ENCODE measurements at regions of chr4 and their contacts with region 1.

Region 1: DNA sequence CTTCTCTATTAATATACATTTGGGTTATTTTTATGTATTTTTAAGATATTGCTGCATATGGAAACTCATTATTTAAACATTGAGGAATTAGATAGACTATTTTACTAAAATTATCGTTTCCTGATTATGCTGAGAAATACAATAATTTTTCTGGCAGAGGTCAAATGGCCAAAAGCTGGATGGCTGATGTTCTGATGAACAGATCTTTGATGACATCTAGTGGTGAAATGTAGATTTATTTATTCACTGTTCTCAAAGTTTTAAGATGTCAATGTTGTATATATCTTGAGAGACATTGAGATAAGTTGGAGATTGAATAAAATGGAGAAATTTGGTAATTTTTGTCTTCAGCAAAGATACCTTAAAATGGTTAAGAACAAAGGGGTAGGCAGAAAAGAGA is 96.2 kb downstream of the UGT8 start:
- DNase-seq: peak; percentile 58
- H3K4me3 ChIP-seq: no peak overlapping the region
- H3K27ac ChIP-seq: no peak overlapping the region
- H3K4me1 ChIP-seq: peaks cover 4% of the 10 kb centered on the region
- H3K27me3 ChIP-seq: peaks cover 0 to 1% of the 10 kb centered on the region in 2 experiments
- CTCF ChIP-seq: peak; percentile 16
- POLR2A ChIP-seq: no peak

Region 2: DNA sequence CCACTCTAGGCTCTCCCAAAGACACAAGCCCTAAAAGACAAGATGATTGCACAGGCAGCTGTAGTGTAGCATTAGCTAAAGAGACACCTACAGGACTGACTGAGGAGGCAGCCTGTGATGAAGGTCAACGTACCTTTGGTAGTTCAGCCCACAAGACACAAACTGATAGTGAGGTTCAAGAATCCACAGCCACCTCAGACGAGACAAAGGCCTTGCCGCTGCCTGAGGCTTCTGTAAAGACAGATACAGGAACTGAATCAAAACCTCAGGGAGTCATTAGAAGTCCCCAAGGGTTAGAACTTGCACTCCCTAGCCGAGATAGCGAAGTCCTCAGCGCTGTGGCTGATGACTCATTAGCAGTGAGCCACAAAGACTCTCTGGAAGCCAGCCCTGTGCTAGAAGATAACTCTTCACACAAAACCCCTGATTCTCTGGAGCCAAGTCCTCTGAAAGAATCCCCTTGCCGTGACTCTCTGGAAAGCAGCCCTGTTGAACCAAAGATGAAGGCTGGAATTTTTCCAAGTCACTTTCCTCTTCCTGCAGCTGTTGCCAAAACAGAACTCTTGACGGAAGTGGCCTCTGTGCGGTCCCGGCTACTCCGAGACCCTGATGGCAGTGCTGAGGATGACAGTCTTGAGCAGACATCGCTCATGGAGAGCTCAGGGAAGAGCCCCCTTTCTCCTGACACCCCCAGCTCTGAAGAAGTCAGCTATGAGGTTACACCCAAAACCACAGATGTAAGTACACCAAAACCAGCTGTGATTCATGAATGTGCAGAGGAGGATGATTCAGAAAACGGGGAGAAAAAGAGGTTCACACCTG is 1339.0 kb before region 1 on chr4:
- CTCF ChIA-PET with region 1: no interaction called
- POLR2A ChIA-PET with region 1: no interaction called
- dilution Hi-C with region 1: no loop called
- intact Hi-C with region 1: loop called (anchors 10 kb)
- DNase-seq: peak; percentile 11
- H3K4me3 ChIP-seq: no peak overlapping the region
- H3K27ac ChIP-seq: no peak overlapping the region
- H3K4me1 ChIP-seq: no peaks in the 10 kb centered on the region
- H3K27me3 ChIP-seq: peaks cover 0 to 16% of the 10 kb centered on the region in 2 experiments
- CTCF ChIP-seq: no peak
- POLR2A ChIP-seq: no peak

Region 3: DNA sequence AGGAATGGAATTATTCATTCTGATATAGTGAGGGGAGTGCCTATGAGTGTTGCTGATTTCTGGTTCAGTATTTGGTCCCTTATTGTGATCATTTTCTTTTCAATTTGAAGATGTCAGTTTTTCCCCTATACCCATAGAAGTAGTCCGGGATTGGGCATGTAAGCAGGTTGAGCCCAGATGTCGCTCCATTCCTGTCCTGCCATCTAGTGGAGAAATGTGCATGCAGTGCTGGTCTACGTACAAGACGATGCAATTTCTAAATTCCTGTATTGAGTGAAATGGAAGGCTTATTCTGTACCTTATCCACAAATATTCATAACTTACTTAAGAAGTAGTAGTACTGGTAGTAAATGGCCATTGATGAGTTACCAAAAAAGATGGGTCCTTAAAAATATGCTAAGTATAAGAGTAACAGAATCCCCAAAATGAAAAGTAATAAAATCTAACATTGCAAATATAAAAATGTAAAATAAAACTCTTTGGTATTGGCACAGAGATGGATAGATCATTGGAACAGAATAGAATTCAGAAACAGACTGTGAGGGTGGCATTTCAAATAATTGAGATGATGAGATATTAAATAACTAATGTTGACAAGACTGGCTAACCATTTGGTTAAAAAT is 35.3 kb before region 1 on chr4:
- CTCF ChIA-PET with region 1: interaction called, 11 read pairs
- POLR2A ChIA-PET with region 1: no interaction called
- dilution Hi-C with region 1: no loop called
- intact Hi-C with region 1: loop called (anchors 2 kb)
- DNase-seq: peak; percentile 68
- H3K4me3 ChIP-seq: no peak overlapping the region
- H3K27ac ChIP-seq: no peak overlapping the region
- H3K4me1 ChIP-seq: no peaks in the 10 kb centered on the region
- H3K27me3 ChIP-seq: no peaks in the 10 kb centered on the region
- CTCF ChIP-seq: peak; percentile 71 to 74
- POLR2A ChIP-seq: no peak

Region 4: GRCh38 chr4:114684462-114684861 is 10.3 kb before region 1 on chr4:
- CTCF ChIA-PET with region 1: interaction called, 17 read pairs
- POLR2A ChIA-PET with region 1: no interaction called
- dilution Hi-C with region 1: no loop called
- intact Hi-C with region 1: no loop called
- DNase-seq: no peak
- H3K4me3 ChIP-seq: no peak overlapping the region
- H3K27ac ChIP-seq: no peak overlapping the region
- H3K4me1 ChIP-seq: no peaks in the 10 kb centered on the region
- H3K27me3 ChIP-seq: peaks cover 1 to 4% of the 10 kb centered on the region in 2 experiments
- CTCF ChIP-seq: no peak
- POLR2A ChIP-seq: no peak

Region 5: GRCh38 chr4:114926583-114926982 is 231.8 kb after region 1 on chr4:
- CTCF ChIA-PET with region 1: no interaction called
- POLR2A ChIA-PET with region 1: no interaction called
- dilution Hi-C with region 1: no loop called
- intact Hi-C with region 1: no loop called
- DNase-seq: no peak
- H3K4me3 ChIP-seq: no peak overlapping the region
- H3K27ac ChIP-seq: no peak overlapping the region
- H3K4me1 ChIP-seq: no peaks in the 10 kb centered on the region
- H3K27me3 ChIP-seq: no peaks in the 10 kb centered on the region
- CTCF ChIP-seq: no peak
- POLR2A ChIP-seq: no peak

Region 6: GRCh38 chr4:114980932-114981708 is 286.4 kb after region 1 on chr4:
- CTCF ChIA-PET with region 1: no interaction called
- POLR2A ChIA-PET with region 1: no interaction called
- dilution Hi-C with region 1: no loop called
- intact Hi-C with region 1: no loop called
- DNase-seq: no peak
- H3K4me3 ChIP-seq: no peak overlapping the region
- H3K27ac ChIP-seq: no peak overlapping the region
- H3K4me1 ChIP-seq: no peaks in the 10 kb centered on the region
- H3K27me3 ChIP-seq: no peaks in the 10 kb centered on the region
- CTCF ChIP-seq: no peak
- POLR2A ChIP-seq: no peak